ENCODE measurements at regions of chr15 and their contacts with region 1.

Region 1: DNA sequence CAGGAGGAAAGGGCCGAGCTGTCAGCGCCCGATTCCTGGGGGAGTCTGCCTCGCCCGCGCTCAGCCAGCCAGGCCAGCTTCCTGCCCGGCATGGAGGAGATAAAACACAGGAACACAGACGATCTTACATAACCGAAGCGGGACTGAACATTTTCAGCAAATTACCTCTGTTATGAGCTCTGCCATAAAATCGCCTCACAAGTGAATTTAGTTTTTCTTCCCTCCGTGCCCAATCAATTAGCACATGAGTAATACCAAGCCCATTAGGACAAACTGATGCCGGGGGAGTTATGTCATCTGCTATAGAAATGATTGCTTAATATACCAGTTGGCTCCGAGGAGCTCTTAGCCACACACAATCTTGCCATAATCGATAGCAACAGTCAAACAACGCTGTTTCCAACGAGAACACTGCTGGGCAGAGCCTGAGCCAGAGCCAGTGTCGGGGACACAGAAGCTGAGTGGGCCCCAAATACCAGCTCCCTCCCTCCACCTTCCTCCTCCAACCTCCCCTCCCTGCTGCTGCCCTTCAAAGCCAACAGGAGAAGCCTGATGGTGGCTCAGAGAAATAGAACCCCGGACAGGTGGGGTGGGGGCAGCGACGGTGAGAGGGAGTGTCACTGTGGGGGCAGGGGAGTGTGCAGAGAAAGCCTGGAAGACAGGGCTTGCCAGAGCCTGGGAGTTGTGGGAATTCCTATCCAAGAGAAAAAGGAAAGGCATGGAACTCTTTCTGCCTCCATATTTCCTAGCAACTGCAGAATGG is 279.4 kb upstream of the TLE3 start:
- DNase-seq: peak in 1 of 2 donors; percentile 35
- H3K4me3 ChIP-seq: peak overlapping the region in 2 of 3 donors; percentile 5 to 23
- H3K27ac ChIP-seq: peak overlapping the region; percentile 59 to 79
- H3K4me1 ChIP-seq: peaks cover 9 to 23% of the 10 kb centered on the region in 2 donors
- H3K27me3 ChIP-seq: peaks cover 0 to 3% of the 10 kb centered on the region in 2 donors
- CTCF ChIP-seq: no peak
- POLR2A ChIP-seq: no peak

Region 2: GRCh38 chr15:70348581-70349570 is 28.2 kb before region 1 on chr15:
- intact Hi-C with region 1: no loop called
- DNase-seq: peak; percentile 65 to 84
- H3K4me3 ChIP-seq: no peak overlapping the region
- H3K27ac ChIP-seq: peak overlapping the region; percentile 58 to 84
- H3K4me1 ChIP-seq: peaks cover 3 to 12% of the 10 kb centered on the region in 2 donors
- H3K27me3 ChIP-seq: no peaks in the 10 kb centered on the region
- CTCF ChIP-seq: no peak
- POLR2A ChIP-seq: no peak

Region 3: GRCh38 chr15:70466895-70467529 is 89.9 kb after region 1 on chr15:
- intact Hi-C with region 1: loop called (anchors 10 kb)
- DNase-seq: no peak
- H3K4me3 ChIP-seq: no peak overlapping the region
- H3K27ac ChIP-seq: no peak overlapping the region
- H3K4me1 ChIP-seq: no peaks in the 10 kb centered on the region
- H3K27me3 ChIP-seq: no peaks in the 10 kb centered on the region
- CTCF ChIP-seq: peak in 2 of 3 donors; percentile 43 to 56
- POLR2A ChIP-seq: no peak

Measured in breast epithelium (tissue), 4 donors.